Calu3 (cell line): ENCODE measurements at regions of chr2 and their contacts with region 1.

Region 1: GRCh38 chr2:135473567-135473966 is 57.5 kb downstream of the ZRANB3 start:
- DNase-seq: peak; percentile 27
- H3K4me3 Mint-ChIP-seq: no peak overlapping the region
- H3K27ac Mint-ChIP-seq: no peak overlapping the region
- H3K4me1 Mint-ChIP-seq: no peaks in the 10 kb centered on the region
- H3K27me3 Mint-ChIP-seq: no peaks in the 10 kb centered on the region
- CTCF ChIP-seq: peak; percentile 40

Region 2: GRCh38 chr2:135004005-135004746 is 469.4 kb before region 1 on chr2:
- CTCF ChIA-PET with region 1: no interaction called
- intact Hi-C with region 1: loop called (anchors 10 kb)
- DNase-seq: peak; percentile 85
- H3K4me3 Mint-ChIP-seq: no peak overlapping the region
- H3K27ac Mint-ChIP-seq: no peak overlapping the region
- H3K4me1 Mint-ChIP-seq: no peaks in the 10 kb centered on the region
- H3K27me3 Mint-ChIP-seq: no peaks in the 10 kb centered on the region
- CTCF ChIP-seq: peak; percentile 95

Region 3: GRCh38 chr2:135531231-135532228 is 58.0 kb after region 1 on chr2 and contains the start of gene R3HDM1:
- CTCF ChIA-PET with region 1: interaction called, 8 read pairs
- intact Hi-C with region 1: loop called (anchors 2 kb)
- DNase-seq: peak; percentile 97
- H3K4me3 Mint-ChIP-seq: no peak within 1 kb of the TSS
- H3K27ac Mint-ChIP-seq: peak within 1 kb of the TSS; percentile 63
- H3K4me1 Mint-ChIP-seq: no peaks in the 10 kb centered on the region
- H3K27me3 Mint-ChIP-seq: no peaks in the 10 kb centered on the region
- CTCF ChIP-seq: no peak
- total RNA-seq, gene R3HDM1: 40.8 and 46.1 TPM in 2 replicates

Region 4: GRCh38 chr2:135600915-135601314 is 127.3 kb after region 1 on chr2:
- CTCF ChIA-PET with region 1: no interaction called
- intact Hi-C with region 1: loop called (anchors 5 kb)
- DNase-seq: no peak
- H3K4me3 Mint-ChIP-seq: no peak overlapping the region
- H3K27ac Mint-ChIP-seq: no peak overlapping the region
- H3K4me1 Mint-ChIP-seq: no peaks in the 10 kb centered on the region
- H3K27me3 Mint-ChIP-seq: no peaks in the 10 kb centered on the region
- CTCF ChIP-seq: no peak

Region 5: DNA sequence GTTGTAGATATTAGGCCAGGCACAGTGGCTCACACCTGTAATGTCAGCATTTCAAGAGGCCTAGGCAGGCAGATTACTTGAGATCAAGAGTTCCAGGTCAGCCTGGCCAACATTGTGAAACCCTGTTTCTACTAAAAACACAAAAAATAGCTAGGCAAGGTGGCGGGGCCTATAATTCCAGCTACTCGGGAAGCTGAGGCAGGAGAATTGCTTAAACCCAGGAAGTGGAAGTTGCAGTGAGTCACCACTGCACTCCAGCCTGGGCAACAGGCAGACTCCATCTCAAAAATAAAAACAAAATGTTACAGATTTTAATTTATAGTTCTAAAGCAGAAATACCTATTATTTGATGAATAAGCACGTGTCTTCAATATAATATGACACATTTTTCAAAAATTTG is 202.5 kb after region 1 on chr2:
- CTCF ChIA-PET with region 1: no interaction called
- intact Hi-C with region 1: no loop called
- DNase-seq: no peak
- H3K4me3 Mint-ChIP-seq: no peak overlapping the region
- H3K27ac Mint-ChIP-seq: no peak overlapping the region
- H3K4me1 Mint-ChIP-seq: no peaks in the 10 kb centered on the region
- H3K27me3 Mint-ChIP-seq: no peaks in the 10 kb centered on the region
- CTCF ChIP-seq: no peak

Region 6: DNA sequence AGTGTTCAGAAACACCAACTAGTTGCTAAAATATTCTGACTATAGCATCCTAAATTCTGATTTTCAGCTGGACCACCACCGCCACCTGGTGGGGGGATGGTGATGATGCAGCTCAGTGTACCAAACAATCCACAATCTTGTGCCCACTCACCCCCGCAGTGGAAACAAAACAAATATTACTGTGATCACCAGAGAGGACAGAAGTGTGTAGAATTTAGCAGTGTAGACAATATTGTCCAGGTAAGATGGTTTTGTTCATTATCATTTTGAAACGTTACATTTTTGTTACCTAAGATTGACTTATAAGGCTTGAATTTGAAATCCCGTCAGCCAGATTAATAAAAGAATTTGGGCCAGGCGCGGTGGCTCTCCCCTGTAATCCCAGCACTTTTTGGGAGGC is 236.4 kb after region 1 on chr2:
- CTCF ChIA-PET with region 1: interaction called, 12 read pairs
- intact Hi-C with region 1: loop called (anchors 1 kb)
- DNase-seq: peak; percentile 70
- H3K4me3 Mint-ChIP-seq: no peak overlapping the region
- H3K27ac Mint-ChIP-seq: no peak overlapping the region
- H3K4me1 Mint-ChIP-seq: no peaks in the 10 kb centered on the region
- H3K27me3 Mint-ChIP-seq: no peaks in the 10 kb centered on the region
- CTCF ChIP-seq: peak; percentile 77

Region 7: DNA sequence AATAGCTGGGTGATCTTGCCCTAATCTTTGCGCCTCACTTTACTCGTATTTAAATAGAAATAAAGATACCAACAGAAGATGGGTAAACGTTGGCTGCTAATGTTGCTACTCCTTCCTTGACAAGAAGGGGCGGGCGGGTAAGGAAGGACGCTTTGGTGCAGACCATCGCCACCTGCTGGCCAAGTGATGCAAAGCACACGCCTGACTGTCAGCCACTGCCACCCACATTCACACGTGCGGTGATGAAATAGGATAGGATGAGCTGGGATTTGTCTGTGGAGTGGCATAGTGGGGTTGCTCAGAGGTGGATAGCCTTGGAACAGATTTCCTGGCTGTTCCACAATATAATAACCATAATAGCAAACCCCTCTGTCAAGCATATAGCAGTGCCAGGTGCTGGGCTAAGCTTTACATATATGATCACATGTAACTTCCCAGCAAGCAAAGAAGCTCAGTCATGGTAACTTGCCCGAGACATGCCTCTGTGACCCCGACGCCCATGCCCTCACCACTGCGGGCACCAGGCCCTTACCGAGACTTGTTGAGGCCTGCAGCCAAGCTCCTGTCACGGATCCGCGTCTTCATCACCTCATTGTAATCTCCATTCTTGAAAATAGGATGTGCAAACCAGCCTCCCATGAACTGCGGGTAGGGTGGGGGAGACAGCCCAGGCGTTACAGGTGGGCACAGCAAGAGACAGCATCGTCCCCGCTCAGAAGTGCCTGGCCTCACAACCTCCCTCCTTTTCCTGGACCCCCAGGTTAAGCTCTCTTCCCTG is 324.1 kb after region 1 on chr2:
- CTCF ChIA-PET with region 1: no interaction called
- intact Hi-C with region 1: loop called (anchors 10 kb)
- DNase-seq: peak; percentile 76
- H3K4me3 Mint-ChIP-seq: no peak overlapping the region
- H3K27ac Mint-ChIP-seq: no peak overlapping the region
- H3K4me1 Mint-ChIP-seq: peaks cover 9% of the 10 kb centered on the region
- H3K27me3 Mint-ChIP-seq: no peaks in the 10 kb centered on the region
- CTCF ChIP-seq: peak; percentile 68